Endothelial cell of umbilical vein (primary cell): ENCODE measurements at regions of chr19 and their contacts with region 1.

Region 1: DNA sequence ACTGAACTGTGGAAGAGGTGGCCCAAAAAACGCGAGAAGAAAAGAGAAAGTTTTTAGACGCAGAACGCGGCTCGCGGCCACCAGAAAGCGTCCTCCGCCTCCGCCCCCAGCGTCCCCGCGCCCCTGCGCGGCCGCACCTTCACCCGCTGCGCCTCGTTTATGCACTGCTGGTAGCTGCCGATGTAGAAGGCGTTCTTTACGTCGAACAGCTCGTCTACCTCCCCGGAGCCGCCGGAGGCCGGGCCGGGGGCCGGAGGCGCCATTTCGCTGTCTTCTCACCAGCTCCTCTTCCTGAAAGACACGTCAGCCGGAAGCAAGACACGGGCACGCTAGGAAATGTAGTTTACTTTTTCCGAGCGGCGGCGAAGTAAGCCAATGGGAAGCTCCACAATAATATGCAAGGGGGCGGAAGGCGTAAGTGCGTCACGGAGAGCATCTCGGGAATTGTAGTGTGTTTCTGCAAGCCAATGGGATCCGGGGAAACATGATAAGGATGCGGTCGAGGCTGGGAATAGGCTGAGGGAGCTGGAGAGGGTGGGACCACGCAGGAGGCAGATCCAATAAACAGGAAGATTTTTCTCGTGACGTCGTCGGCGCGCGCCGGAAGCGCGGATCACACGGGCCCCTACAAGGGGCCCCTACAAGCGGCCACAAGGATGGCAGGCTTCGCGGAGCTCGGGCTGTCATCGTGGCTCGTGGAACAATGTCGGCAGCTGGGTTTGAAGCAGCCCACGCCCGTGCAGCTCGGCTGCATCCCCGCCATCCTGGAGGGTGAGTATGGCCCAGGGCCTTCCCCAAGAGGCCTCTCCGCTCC is at the starts of genes COPE and DDX49:
- DNase-seq: peak; percentile 100
- H3K4me3 ChIP-seq: peak within 1 kb of the TSS; percentile 82 to 99 (median 94)
- H3K27ac ChIP-seq: peak within 1 kb of the TSS; percentile 87
- H3K4me1 ChIP-seq: peaks cover 13% of the 10 kb centered on the region
- H3K27me3 ChIP-seq: no peaks in the 10 kb centered on the region
- CTCF ChIP-seq: no peak
- POLR2A ChIP-seq: peak; percentile 78
- total RNA-seq, gene COPE: 239 and 252 TPM in 2 replicates
- total RNA-seq, gene DDX49: 47.7 and 51.9 TPM in 2 replicates

Region 2: DNA sequence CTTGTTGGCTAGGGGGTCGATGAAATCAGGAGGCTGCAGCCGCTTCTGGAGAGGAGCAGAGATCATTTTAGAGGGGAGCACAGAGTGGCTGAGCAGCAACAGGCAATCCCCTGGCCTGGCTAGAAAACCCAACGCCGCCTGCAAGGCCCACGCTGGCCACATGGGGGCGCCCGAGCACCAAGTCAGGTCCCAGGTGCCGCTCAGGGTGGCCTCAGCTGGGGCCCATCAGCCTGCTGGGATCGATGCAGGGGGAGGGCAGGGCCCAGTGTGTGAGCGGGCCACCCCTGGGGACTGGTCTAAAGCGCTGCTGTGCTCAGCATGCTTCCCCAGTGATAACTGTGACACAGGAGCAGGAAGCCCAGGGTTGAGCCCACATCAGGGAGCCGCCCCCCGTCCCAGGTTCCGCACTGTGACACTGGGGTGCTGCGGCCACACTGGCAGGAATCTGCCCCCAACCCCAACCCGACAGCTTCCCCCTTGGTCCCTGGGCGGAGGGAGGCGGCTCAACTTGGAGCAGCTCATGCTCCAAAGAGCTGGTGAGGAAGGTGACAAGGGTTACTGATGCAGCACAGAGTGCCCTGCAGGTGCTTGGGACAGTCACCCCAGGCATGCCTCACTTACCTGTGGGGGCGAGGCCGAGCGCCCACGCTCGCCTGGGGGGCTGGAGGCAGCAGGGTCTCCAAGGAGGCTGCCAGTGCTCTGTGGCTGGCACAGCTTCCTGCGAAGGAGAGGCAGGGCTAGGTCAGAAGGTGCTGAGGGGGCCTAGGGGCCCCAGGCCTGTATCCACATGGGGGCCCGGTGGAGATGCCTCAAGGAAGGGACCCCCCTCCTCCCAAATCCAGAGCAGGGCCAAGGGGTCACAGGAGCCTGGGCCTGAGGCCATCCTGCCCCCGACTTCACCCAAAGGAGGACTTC is 468.1 kb before region 1 on chr19:
- CTCF ChIA-PET with region 1: no interaction called
- POLR2A ChIA-PET with region 1: no interaction called
- dilution Hi-C with region 1: no loop called
- intact Hi-C with region 1: loop called (anchors 10 kb)
- DNase-seq: peak; percentile 65
- H3K4me3 ChIP-seq: no peak overlapping the region
- H3K27ac ChIP-seq: no peak overlapping the region
- H3K4me1 ChIP-seq: no peaks in the 10 kb centered on the region
- H3K27me3 ChIP-seq: no peaks in the 10 kb centered on the region
- CTCF ChIP-seq: peak; percentile 97 to 99
- POLR2A ChIP-seq: no peak

Region 3: GRCh38 chr19:18594096-18594823 is 325.0 kb before region 1 on chr19:
- CTCF ChIA-PET with region 1: interaction called, 5 read pairs
- POLR2A ChIA-PET with region 1: no interaction called
- dilution Hi-C with region 1: no loop called
- intact Hi-C with region 1: loop called (anchors 1 kb)
- DNase-seq: peak; percentile 80
- H3K4me3 ChIP-seq: peak overlapping the region in 2 of 3 experiments; percentile 14 to 25
- H3K27ac ChIP-seq: no peak overlapping the region
- H3K4me1 ChIP-seq: peaks cover 12% of the 10 kb centered on the region
- H3K27me3 ChIP-seq: no peaks in the 10 kb centered on the region
- CTCF ChIP-seq: peak; percentile 71 to 90
- POLR2A ChIP-seq: no peak

Region 4: GRCh38 chr19:18865973-18866799 is 53.1 kb before region 1 on chr19:
- CTCF ChIA-PET with region 1: interaction called, 4 read pairs
- POLR2A ChIA-PET with region 1: no interaction called
- dilution Hi-C with region 1: no loop called
- intact Hi-C with region 1: loop called (anchors 10 kb)
- DNase-seq: peak; percentile 60
- H3K4me3 ChIP-seq: no peak overlapping the region
- H3K27ac ChIP-seq: no peak overlapping the region
- H3K4me1 ChIP-seq: no peaks in the 10 kb centered on the region
- H3K27me3 ChIP-seq: peaks cover 5 to 7% of the 10 kb centered on the region in 2 experiments
- CTCF ChIP-seq: peak; percentile 93 to 99
- POLR2A ChIP-seq: no peak

Region 5: DNA sequence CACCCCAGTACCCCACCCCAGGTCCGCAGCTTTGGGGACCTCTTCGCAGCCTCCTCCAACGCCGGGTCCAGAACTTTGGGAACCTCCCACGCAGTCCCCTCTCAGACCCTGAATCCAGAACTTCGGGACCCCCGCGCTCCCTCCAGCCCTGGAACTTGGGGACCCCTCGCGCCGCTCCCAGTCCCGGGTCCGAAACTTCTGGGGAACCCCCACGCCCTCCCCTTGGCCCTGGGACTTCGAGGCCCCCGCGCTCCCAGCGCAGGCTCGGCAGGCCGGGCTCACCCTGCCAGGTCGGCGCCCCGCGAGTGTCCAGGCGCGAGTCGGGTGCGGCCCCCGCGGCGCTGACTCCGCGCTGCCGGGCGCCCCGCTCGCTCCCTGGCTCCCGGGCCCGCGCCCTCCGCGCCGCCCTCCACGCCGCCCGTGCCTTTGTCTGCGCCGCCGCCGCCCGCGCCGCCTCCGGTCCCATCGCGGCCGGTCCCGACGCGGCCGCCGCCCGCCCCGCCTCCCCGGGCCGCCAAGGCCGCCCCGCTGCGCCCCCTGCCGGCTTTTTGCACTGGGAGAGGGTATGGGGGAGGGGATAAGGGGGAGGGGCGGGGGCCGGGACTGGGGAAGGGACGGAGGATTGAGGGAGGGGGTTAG is 21.6 kb after region 1 on chr19 and contains the start of gene HOMER3:
- CTCF ChIA-PET with region 1: no interaction called
- POLR2A ChIA-PET with region 1: no interaction called
- dilution Hi-C with region 1: no loop called
- intact Hi-C with region 1: loop called (anchors 2 kb)
- DNase-seq: peak; percentile 20
- H3K4me3 ChIP-seq: peak within 1 kb of the TSS; percentile 88 to 99 (median 97)
- H3K27ac ChIP-seq: peak within 1 kb of the TSS; percentile 70
- H3K4me1 ChIP-seq: peaks cover 7% of the 10 kb centered on the region
- H3K27me3 ChIP-seq: no peaks in the 10 kb centered on the region
- CTCF ChIP-seq: no peak
- POLR2A ChIP-seq: no peak
- total RNA-seq, gene HOMER3: 131 and 139 TPM in 2 replicates

Region 6: GRCh38 chr19:18985257-18985656 is 66.0 kb after region 1 on chr19:
- CTCF ChIA-PET with region 1: interaction called, 23 read pairs
- POLR2A ChIA-PET with region 1: interaction called, 5 read pairs
- dilution Hi-C with region 1: no loop called
- intact Hi-C with region 1: loop called (anchors 1 kb)
- DNase-seq: peak; percentile 92
- H3K4me3 ChIP-seq: no peak overlapping the region
- H3K27ac ChIP-seq: peak overlapping the region; percentile 30
- H3K4me1 ChIP-seq: peaks cover 16% of the 10 kb centered on the region
- H3K27me3 ChIP-seq: peaks cover 0 to 8% of the 10 kb centered on the region in 2 experiments
- CTCF ChIP-seq: no peak
- POLR2A ChIP-seq: no peak